Activated CD4-positive, alpha-beta T cell treated with anti-CD3 and anti-CD28 coated beads, Interleukin-2, amount 10 ng/mL, durations not matched to agents 24 days and 14 days (primary cell): ENCODE measurements at regions of chr20 and their contacts with region 1.

Region 1: DNA sequence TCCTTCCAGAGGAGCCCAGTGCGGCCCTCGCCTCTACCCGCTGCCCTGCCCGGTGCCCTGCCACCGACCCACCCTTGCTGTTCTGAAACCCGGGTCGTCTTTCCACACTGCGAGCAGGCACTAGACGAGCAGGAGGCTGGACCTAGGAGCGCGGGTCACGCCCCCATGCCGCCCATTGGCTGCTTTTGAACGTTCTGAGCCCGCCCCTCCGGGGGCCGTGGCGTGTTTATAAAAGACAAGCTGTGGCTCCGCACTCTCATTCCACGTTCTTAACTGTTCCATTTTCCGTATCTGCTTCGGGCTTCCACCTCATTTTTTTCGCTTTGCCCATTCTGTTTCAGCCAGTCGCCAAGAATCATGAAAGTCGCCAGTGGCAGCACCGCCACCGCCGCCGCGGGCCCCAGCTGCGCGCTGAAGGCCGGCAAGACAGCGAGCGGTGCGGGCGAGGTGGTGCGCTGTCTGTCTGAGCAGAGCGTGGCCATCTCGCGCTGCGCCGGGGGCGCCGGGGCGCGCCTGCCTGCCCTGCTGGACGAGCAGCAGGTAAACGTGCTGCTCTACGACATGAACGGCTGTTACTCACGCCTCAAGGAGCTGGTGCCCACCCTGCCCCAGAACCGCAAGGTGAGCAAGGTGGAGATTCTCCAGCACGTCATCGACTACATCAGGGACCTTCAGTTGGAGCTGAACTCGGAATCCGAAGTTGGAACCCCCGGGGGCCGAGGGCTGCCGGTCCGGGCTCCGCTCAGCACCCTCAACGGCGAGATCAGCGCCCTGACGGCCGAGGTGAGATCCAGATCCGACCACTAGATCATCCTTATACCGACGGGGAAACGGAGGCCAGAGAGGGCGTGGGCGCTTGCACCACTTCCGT is at the start of gene ID1:
- DNase-seq: peak; percentile 97
- H3K4me3 Mint-ChIP-seq: peak within 1 kb of the TSS; percentile 98
- H3K27ac Mint-ChIP-seq: peak within 1 kb of the TSS; percentile 30
- H3K4me1 Mint-ChIP-seq: peaks cover 26% of the 10 kb centered on the region
- H3K27me3 Mint-ChIP-seq: peaks cover 52% of the 10 kb centered on the region
- total RNA-seq, gene ID1: 2.7 and 2.9 TPM in 2 replicates

Region 2: DNA sequence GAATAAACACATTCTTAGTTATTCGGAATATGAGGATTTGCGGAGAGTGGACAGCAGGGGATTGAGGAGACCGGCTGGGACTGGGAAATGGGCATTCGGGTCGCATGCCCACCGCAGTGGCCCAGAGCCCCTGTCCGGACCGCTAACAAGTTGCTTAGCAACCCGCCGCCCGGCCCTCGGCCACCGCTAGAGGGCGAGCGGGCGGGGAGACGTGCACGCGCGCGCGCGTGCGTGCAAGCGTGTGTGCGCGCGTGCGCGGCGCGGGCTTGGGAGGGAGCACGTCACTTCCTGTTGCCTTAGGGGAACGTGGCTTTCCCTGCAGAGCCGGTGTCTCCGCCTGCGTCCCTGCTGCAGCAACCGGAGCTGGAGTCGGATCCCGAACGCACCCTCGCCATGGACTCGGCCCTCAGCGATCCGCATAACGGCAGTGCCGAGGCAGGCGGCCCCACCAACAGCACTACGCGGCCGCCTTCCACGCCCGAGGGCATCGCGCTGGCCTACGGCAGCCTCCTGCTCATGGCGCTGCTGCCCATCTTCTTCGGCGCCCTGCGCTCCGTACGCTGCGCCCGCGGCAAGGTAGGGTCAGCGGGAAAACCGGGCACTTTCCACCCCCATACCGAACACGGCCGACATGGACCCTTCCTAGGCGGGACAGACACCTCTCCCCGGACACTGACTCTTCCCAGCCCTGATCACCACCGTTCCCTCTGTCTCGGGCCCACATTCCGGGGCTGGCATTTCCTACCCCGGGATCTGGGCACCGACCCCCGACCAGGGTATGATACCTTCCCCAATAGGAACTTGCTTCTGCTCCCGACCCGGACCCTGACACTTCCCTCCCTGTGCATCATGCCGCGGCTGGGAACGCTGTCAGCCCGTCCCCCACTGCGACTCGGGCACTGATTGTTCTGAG is 90.9 kb before region 1 on chr20 and contains the start of gene HM13:
- intact Hi-C with region 1: loop called (anchors 2 kb)
- DNase-seq: peak; percentile 97
- H3K4me3 Mint-ChIP-seq: no peak within 1 kb of the TSS
- H3K27ac Mint-ChIP-seq: peak within 1 kb of the TSS; percentile 45
- H3K4me1 Mint-ChIP-seq: peaks cover 10% of the 10 kb centered on the region
- H3K27me3 Mint-ChIP-seq: no peaks in the 10 kb centered on the region
- total RNA-seq, gene HM13: 181 and 193 TPM in 2 replicates

Region 3: GRCh38 chr20:31572701-31573554 is 32.3 kb before region 1 on chr20:
- intact Hi-C with region 1: loop called (anchors 1 kb)
- DNase-seq: peak; percentile 95
- H3K4me3 Mint-ChIP-seq: peak overlapping the region; percentile 92
- H3K27ac Mint-ChIP-seq: peak overlapping the region; percentile 91
- H3K4me1 Mint-ChIP-seq: peaks cover 19% of the 10 kb centered on the region
- H3K27me3 Mint-ChIP-seq: peaks cover 2% of the 10 kb centered on the region

Region 4: GRCh38 chr20:31587545-31588389 is 17.5 kb before region 1 on chr20:
- intact Hi-C with region 1: loop called (anchors 2 kb)
- DNase-seq: peak; percentile 71
- H3K4me3 Mint-ChIP-seq: peak overlapping the region; percentile 84
- H3K27ac Mint-ChIP-seq: peak overlapping the region; percentile 60
- H3K4me1 Mint-ChIP-seq: peaks cover 7% of the 10 kb centered on the region
- H3K27me3 Mint-ChIP-seq: peaks cover 32% of the 10 kb centered on the region